CD4-positive, alpha-beta T cell (primary cell): ENCODE measurements at regions of chr5 and their contacts with region 1.

Region 1: GRCh38 chr5:42143361-42143760 is 218.3 kb downstream of the FBXO4 start:
- DNase-seq: no peak
- ATAC-seq: no peak
- H3K4me3 ChIP-seq: no peak overlapping the region
- H3K4me3 Mint-ChIP-seq: no peak overlapping the region
- H3K27ac ChIP-seq: no peak overlapping the region
- H3K27ac Mint-ChIP-seq: no peak overlapping the region
- H3K4me1 ChIP-seq: no peaks in the 10 kb centered on the region
- H3K4me1 Mint-ChIP-seq: no peaks in the 10 kb centered on the region
- H3K27me3 ChIP-seq: no peaks in the 10 kb centered on the region
- H3K27me3 Mint-ChIP-seq: no peaks in the 10 kb centered on the region
- CTCF ChIP-seq: no peak

Region 2: DNA sequence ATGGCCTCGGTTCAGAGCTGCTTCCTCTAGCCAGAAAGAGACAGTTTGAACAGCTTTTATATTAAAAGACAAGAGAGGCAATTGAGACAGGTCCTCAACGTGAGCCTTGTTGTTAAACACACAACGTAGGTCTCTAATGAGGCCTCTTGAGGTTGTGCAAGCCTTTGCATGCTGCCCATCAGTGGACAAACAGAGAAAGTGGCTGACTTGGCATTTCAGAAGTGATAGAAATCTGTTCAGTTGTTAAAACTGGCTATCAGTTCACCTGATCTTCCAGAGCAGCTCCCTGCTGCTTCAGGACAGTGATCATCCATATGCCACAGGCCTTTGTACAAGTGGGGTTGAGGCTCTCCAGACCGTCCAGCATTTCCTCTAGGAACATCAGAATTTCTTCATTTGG is 1131.0 kb before region 1 on chr5:
- CTCF ChIA-PET with region 1: no interaction called
- POLR2A ChIA-PET with region 1: no interaction called
- intact Hi-C with region 1: loop called in 1 of 2 experiments (anchors 10 kb)
- DNase-seq: no peak
- ATAC-seq: no peak
- H3K4me3 ChIP-seq: no peak overlapping the region
- H3K4me3 Mint-ChIP-seq: no peak overlapping the region
- H3K27ac ChIP-seq: no peak overlapping the region
- H3K27ac Mint-ChIP-seq: no peak overlapping the region
- H3K4me1 ChIP-seq: no peaks in the 10 kb centered on the region
- H3K4me1 Mint-ChIP-seq: no peaks in the 10 kb centered on the region
- H3K27me3 ChIP-seq: no peaks in the 10 kb centered on the region
- H3K27me3 Mint-ChIP-seq: peaks cover 19% of the 10 kb centered on the region
- CTCF ChIP-seq: no peak

Region 3: DNA sequence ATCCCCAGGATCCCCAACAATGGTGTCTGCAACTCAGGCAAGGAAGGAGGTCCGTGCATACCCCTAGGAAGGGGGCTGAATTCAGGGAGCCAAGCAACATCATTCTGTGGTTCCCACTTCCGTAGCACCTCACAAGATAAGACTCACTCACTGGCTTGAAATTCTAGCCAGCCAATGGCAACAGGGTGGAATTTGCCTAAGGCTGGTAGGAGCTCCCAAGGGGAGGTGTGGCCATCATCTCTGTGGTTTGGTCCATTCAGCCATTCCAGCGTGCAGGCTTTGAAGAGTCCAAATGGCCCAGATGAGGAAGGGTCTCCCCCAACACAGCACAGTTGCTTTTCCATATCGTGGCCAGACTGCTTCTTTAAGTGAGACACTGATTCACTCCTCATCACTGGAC is 66.6 kb before region 1 on chr5:
- CTCF ChIA-PET with region 1: no interaction called
- POLR2A ChIA-PET with region 1: no interaction called
- intact Hi-C with region 1: no loop called
- DNase-seq: no peak
- ATAC-seq: no peak
- H3K4me3 ChIP-seq: no peak overlapping the region
- H3K4me3 Mint-ChIP-seq: no peak overlapping the region
- H3K27ac ChIP-seq: no peak overlapping the region
- H3K27ac Mint-ChIP-seq: no peak overlapping the region
- H3K4me1 ChIP-seq: no peaks in the 10 kb centered on the region
- H3K4me1 Mint-ChIP-seq: no peaks in the 10 kb centered on the region
- H3K27me3 ChIP-seq: peaks cover 6 to 15% of the 10 kb centered on the region in 2 experiments
- H3K27me3 Mint-ChIP-seq: peaks cover 24% of the 10 kb centered on the region
- CTCF ChIP-seq: no peak

Region 4: DNA sequence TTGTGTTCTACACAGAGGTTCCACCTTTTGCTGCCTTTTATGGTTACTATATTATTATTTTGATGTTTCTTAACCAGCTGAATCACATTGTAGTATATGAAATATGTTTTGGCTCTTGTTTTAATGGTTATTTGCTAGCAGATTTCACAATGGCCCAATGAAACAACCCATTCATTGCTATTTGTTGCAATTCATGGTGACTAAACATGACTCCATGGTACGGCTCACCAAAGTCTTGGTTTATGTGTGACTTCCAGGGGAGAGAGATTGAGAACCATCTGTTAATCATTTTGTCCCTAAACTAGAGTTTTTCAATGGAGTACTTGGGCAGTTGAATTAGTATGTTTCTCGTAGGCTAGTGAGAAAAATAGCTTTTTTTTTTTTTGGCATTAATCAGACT is 388.2 kb after region 1 on chr5:
- CTCF ChIA-PET with region 1: no interaction called
- POLR2A ChIA-PET with region 1: no interaction called
- intact Hi-C with region 1: no loop called
- DNase-seq: no peak
- ATAC-seq: no peak
- H3K4me3 ChIP-seq: no peak overlapping the region
- H3K4me3 Mint-ChIP-seq: no peak overlapping the region
- H3K27ac ChIP-seq: no peak overlapping the region
- H3K27ac Mint-ChIP-seq: no peak overlapping the region
- H3K4me1 ChIP-seq: no peaks in the 10 kb centered on the region
- H3K4me1 Mint-ChIP-seq: no peaks in the 10 kb centered on the region
- H3K27me3 ChIP-seq: no peaks in the 10 kb centered on the region
- H3K27me3 Mint-ChIP-seq: no peaks in the 10 kb centered on the region
- CTCF ChIP-seq: no peak